Activated naive CD4-positive, alpha-beta T cell treated with anti-CD3 and anti-CD28 coated beads, Interleukin-2, amount 10 ng/mL, durations not matched to agents 7 days and 5 days (primary cell): ENCODE measurements at regions of chr22 and their contacts with region 1.

Region 1: GRCh38 chr22:24189249-24190158 is 8.2 kb downstream of the SUSD2 start:
- DNase-seq: peak; percentile 74
- H3K4me3 Mint-ChIP-seq: no peak overlapping the region
- H3K27ac Mint-ChIP-seq: no peak overlapping the region
- H3K4me1 Mint-ChIP-seq: peaks cover 2% of the 10 kb centered on the region
- H3K27me3 Mint-ChIP-seq: peaks cover 17% of the 10 kb centered on the region

Region 2: DNA sequence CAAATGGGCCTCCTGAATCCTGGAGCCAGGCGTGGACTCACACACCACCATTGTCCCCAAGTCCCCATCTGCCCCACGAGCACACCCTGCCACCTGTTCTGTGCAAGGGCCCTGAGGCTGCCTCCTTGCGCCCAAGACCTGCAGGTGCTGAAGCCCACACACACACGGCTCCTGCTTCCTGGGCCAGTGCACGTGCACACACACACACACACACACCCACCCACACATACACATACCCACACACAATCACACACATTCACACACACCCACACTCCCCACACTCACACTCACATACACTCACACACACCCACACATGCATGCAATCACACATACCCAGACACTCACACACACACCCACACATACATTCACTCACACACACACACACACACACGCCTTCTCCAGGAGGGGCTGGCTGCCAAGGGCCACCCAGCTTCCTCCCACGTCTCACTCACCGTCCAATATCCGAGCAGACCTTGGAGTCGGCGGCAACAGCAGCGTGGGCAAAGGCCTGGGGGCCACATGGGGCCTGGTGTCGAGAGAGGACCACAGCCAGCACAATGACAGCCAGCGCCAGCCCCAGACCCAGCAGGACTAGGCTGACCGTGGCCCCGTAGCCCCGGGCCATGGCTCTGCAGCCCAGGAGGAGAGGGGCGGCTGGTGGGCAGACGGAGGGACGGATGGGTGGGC is 54.7 kb after region 1 on chr22:
- CTCF ChIA-PET with region 1: interaction called, 33 read pairs
- DNase-seq: no peak
- H3K4me3 Mint-ChIP-seq: no peak overlapping the region
- H3K27ac Mint-ChIP-seq: peak overlapping the region; percentile 80
- H3K4me1 Mint-ChIP-seq: peaks cover 48% of the 10 kb centered on the region
- H3K27me3 Mint-ChIP-seq: peaks cover 7% of the 10 kb centered on the region